K562 (cell line): ENCODE measurements at regions of chr15 and their contacts with region 1.

Region 1: DNA sequence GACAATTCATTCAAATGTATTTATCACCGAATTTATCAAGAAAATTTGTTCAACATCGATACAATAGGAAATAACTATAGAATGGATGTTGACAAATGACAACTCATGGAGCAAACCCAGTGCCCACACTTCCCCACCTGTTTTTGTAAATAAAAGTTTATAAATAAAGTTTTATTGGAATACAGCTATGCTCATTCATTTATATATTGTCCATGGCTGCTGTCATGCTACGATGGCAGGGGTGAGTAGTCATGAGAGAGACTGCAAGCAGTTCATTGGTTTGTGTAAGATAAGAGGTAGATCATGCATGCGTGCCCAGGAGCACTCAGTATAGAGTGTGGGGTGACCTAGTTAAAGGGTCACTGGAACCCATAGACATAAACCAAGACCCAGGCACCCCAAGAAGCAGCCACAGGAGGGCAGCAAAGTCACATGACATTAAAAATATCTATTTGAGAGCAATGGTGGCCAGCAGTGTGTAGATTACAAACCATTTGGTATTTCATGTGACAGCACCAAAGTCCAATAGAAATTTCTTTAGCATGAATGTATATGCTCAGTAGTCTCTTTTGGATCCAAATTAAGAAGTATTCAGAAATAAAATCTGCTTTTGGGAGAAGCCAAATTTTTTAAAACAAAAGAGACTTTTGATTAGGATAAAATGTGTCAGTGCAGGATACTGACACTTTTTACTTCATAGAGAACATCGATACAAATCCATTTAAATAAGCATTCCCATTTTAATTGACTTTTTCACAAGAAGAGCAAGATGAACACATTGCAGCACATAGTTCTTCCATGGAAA is 794.8 kb downstream of the MCTP2 start:
- DNase-seq: peak; percentile 60 to 80 (median 64)
- ATAC-seq: peak; percentile 98
- H3K4me3 ChIP-seq: no peak overlapping the region
- H3K27ac ChIP-seq: no peak overlapping the region
- H3K4me1 ChIP-seq: no peaks in the 10 kb centered on the region
- H3K27me3 ChIP-seq: no peaks in the 10 kb centered on the region
- CTCF ChIP-seq: peak; percentile 59 to 76 (median 64)
- EP300 ChIP-seq: no peak
- POLR2A ChIP-seq: no peak
- RAD21 ChIP-seq: peak; percentile 47 to 76

Region 2: GRCh38 chr15:94670438-94671034 is 355.6 kb before region 1 on chr15:
- CTCF ChIA-PET with region 1: no interaction called
- POLR2A ChIA-PET with region 1: no interaction called
- in situ Hi-C with region 1: no loop called
- intact Hi-C with region 1: loop called (anchors 5 kb)
- DNase-seq: peak; percentile 30 to 66 (median 44)
- ATAC-seq: peak; percentile 78
- H3K4me3 ChIP-seq: no peak overlapping the region
- H3K27ac ChIP-seq: no peak overlapping the region
- H3K4me1 ChIP-seq: no peaks in the 10 kb centered on the region; a peak in 1 of 5 replicates
- H3K27me3 ChIP-seq: peaks cover 4 to 28% of the 10 kb centered on the region in 2 experiments; a peak in 4 of 5 replicates
- CTCF ChIP-seq: peak; percentile 35 to 80 (median 54); a peak in 4 of 6 replicates
- EP300 ChIP-seq: no peak
- POLR2A ChIP-seq: no peak
- RAD21 ChIP-seq: peak; percentile 84 to 91

Region 3: GRCh38 chr15:95169541-95170459 is 143.7 kb after region 1 on chr15:
- CTCF ChIA-PET with region 1: no interaction called
- POLR2A ChIA-PET with region 1: no interaction called
- in situ Hi-C with region 1: no loop called
- intact Hi-C with region 1: loop called (anchors 5 kb)
- DNase-seq: peak in 2 of 4 experiments; percentile 29 to 60
- ATAC-seq: peak; percentile 74
- H3K4me3 ChIP-seq: peak overlapping the region; percentile 13; the same call in 1 of the 2 replicates
- H3K27ac ChIP-seq: peak overlapping the region; percentile 88
- H3K4me1 ChIP-seq: peaks cover 19 to 36% of the 10 kb centered on the region in 2 experiments
- H3K27me3 ChIP-seq: no peaks in the 10 kb centered on the region
- CTCF ChIP-seq: no peak
- EP300 ChIP-seq: no peak
- POLR2A ChIP-seq: no peak
- RAD21 ChIP-seq: no peak

Region 4: DNA sequence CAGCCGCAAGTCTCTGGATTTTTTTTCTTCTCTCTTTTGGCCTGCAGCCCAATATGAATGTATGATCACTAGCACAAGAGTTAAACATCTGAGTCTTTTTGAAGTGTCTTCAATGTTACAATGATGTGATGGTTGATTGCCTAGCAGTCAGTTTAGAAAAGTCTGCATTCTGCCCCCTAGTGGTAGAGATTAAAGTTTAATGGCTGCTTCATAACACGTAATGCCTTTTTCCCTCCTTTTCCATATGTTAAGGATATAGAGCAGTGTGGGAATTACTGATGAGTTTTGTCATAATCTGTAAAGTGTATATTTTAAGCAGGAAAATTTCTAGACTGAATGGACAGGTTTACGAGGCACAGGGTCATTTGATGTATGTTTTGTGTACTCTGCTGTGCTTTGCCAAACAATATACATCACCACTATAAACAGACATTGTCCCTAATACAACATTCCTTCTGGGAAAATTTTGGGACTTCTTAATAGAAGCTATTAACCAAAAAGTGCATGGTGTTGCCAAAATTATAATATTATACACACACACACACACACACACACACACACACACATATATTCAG is 265.9 kb after region 1 on chr15:
- CTCF ChIA-PET with region 1: no interaction called
- POLR2A ChIA-PET with region 1: no interaction called
- in situ Hi-C with region 1: no loop called
- intact Hi-C with region 1: loop called (anchors 1 kb)
- DNase-seq: peak; percentile 40 to 64 (median 59)
- ATAC-seq: peak; percentile 86
- H3K4me3 ChIP-seq: no peak overlapping the region
- H3K27ac ChIP-seq: no peak overlapping the region
- H3K4me1 ChIP-seq: no peaks in the 10 kb centered on the region
- H3K27me3 ChIP-seq: peaks cover 7 to 32% of the 10 kb centered on the region in 2 experiments
- CTCF ChIP-seq: peak; percentile 50 to 70 (median 62); a peak in 5 of 6 replicates
- EP300 ChIP-seq: no peak
- POLR2A ChIP-seq: no peak
- RAD21 ChIP-seq: peak; percentile 40 to 70; a peak in 3 of 4 replicates